ENCODE measurements at regions of chr9 and their contacts with region 1.

Region 1: GRCh38 chr9:35237311-35237710 is 75.5 kb downstream of the UNC13B start:
- DNase-seq: peak; percentile 51 to 76
- H3K4me3 ChIP-seq: no peak overlapping the region
- H3K4me3 Mint-ChIP-seq: peak overlapping the region; percentile 53
- H3K27ac Mint-ChIP-seq: peak overlapping the region; percentile 45
- H3K4me1 ChIP-seq: peaks cover 21% of the 10 kb centered on the region
- H3K4me1 Mint-ChIP-seq: peaks cover 7% of the 10 kb centered on the region
- H3K27me3 ChIP-seq: no peaks in the 10 kb centered on the region
- H3K27me3 Mint-ChIP-seq: no peaks in the 10 kb centered on the region
- CTCF ChIP-seq: no peak

Region 2: GRCh38 chr9:35161713-35162604 is 75.4 kb before region 1 on chr9 and contains the start of gene UNC13B:
- CTCF ChIA-PET with region 1: interaction called, 8 read pairs
- POLR2A ChIA-PET with region 1: no interaction called
- intact Hi-C with region 1: loop called (anchors 5 kb)
- DNase-seq: peak; percentile 95 to 97
- H3K4me3 ChIP-seq: peak within 1 kb of the TSS; percentile 78
- H3K4me3 Mint-ChIP-seq: peak within 1 kb of the TSS; percentile 80
- H3K27ac Mint-ChIP-seq: peak within 1 kb of the TSS; percentile 79
- H3K4me1 ChIP-seq: peaks cover 10% of the 10 kb centered on the region
- H3K4me1 Mint-ChIP-seq: no peaks in the 10 kb centered on the region
- H3K27me3 ChIP-seq: no peaks in the 10 kb centered on the region
- H3K27me3 Mint-ChIP-seq: no peaks in the 10 kb centered on the region
- CTCF ChIP-seq: peak in 1 of 2 experiments; percentile 16
- total RNA-seq, gene UNC13B: 19.7 and 20.8 TPM in 2 replicates

Region 3: DNA sequence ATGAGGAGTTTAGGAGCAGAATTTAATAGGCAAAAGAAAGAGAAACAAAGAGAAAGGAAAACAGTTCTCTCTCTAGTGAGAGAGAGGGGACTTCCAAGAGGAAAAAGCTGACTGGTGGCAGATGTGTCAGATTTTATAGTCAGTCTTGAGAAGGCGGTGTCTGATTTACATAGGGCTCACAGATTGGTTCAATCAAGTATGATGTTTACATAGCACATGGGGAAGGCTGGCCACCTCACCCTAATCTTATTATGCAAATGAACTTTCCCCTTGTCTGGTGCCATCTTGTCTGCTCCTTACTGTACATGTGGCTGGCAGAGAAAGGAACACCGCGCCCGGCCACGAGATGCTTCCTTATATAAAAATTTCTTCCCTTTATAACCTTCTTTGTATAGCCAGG is 50.8 kb before region 1 on chr9:
- CTCF ChIA-PET with region 1: no interaction called
- POLR2A ChIA-PET with region 1: no interaction called
- intact Hi-C with region 1: no loop called
- DNase-seq: no peak
- H3K4me3 ChIP-seq: no peak overlapping the region
- H3K4me3 Mint-ChIP-seq: no peak overlapping the region
- H3K27ac Mint-ChIP-seq: no peak overlapping the region
- H3K4me1 ChIP-seq: no peaks in the 10 kb centered on the region
- H3K4me1 Mint-ChIP-seq: no peaks in the 10 kb centered on the region
- H3K27me3 ChIP-seq: no peaks in the 10 kb centered on the region
- H3K27me3 Mint-ChIP-seq: no peaks in the 10 kb centered on the region
- CTCF ChIP-seq: no peak

Region 4: GRCh38 chr9:35226660-35227059 is 10.7 kb before region 1 on chr9:
- CTCF ChIA-PET with region 1: no interaction called
- POLR2A ChIA-PET with region 1: no interaction called
- intact Hi-C with region 1: loop called (anchors 1 kb)
- DNase-seq: no peak
- H3K4me3 ChIP-seq: no peak overlapping the region
- H3K4me3 Mint-ChIP-seq: no peak overlapping the region
- H3K27ac Mint-ChIP-seq: no peak overlapping the region
- H3K4me1 ChIP-seq: peaks cover 10% of the 10 kb centered on the region; the same call in 1 of the 2 replicates
- H3K4me1 Mint-ChIP-seq: peaks cover 7% of the 10 kb centered on the region
- H3K27me3 ChIP-seq: no peaks in the 10 kb centered on the region
- H3K27me3 Mint-ChIP-seq: no peaks in the 10 kb centered on the region
- CTCF ChIP-seq: no peak

Region 5: GRCh38 chr9:35470894-35471293 is 233.6 kb after region 1 on chr9:
- CTCF ChIA-PET with region 1: no interaction called
- POLR2A ChIA-PET with region 1: no interaction called
- intact Hi-C with region 1: no loop called
- DNase-seq: no peak
- H3K4me3 ChIP-seq: no peak overlapping the region
- H3K4me3 Mint-ChIP-seq: no peak overlapping the region
- H3K27ac Mint-ChIP-seq: no peak overlapping the region
- H3K4me1 ChIP-seq: peaks cover 5% of the 10 kb centered on the region; the same call in 1 of the 2 replicates
- H3K4me1 Mint-ChIP-seq: peaks cover 9% of the 10 kb centered on the region
- H3K27me3 ChIP-seq: no peaks in the 10 kb centered on the region
- H3K27me3 Mint-ChIP-seq: no peaks in the 10 kb centered on the region
- CTCF ChIP-seq: no peak